ENCODE measurements at regions of chr18 and their contacts with region 1.

Region 1: GRCh38 chr18:9136315-9137155 is at the start of gene ANKRD12:
- DNase-seq: peak; percentile 98
- H3K4me3 Mint-ChIP-seq: peak within 1 kb of the TSS; percentile 95
- H3K27ac Mint-ChIP-seq: peak within 1 kb of the TSS; percentile 99
- H3K4me1 Mint-ChIP-seq: peaks cover 54% of the 10 kb centered on the region
- H3K27me3 Mint-ChIP-seq: no peaks in the 10 kb centered on the region
- total RNA-seq, gene ANKRD12: 66.0 and 68.7 TPM in 2 replicates

Region 2: GRCh38 chr18:9017170-9017904 is 119.2 kb before region 1 on chr18:
- intact Hi-C with region 1: loop called (anchors 2 kb)
- DNase-seq: peak; percentile 53
- H3K4me3 Mint-ChIP-seq: peak overlapping the region; percentile 28
- H3K27ac Mint-ChIP-seq: peak overlapping the region; percentile 62
- H3K4me1 Mint-ChIP-seq: peaks cover 19% of the 10 kb centered on the region
- H3K27me3 Mint-ChIP-seq: no peaks in the 10 kb centered on the region

Region 3: DNA sequence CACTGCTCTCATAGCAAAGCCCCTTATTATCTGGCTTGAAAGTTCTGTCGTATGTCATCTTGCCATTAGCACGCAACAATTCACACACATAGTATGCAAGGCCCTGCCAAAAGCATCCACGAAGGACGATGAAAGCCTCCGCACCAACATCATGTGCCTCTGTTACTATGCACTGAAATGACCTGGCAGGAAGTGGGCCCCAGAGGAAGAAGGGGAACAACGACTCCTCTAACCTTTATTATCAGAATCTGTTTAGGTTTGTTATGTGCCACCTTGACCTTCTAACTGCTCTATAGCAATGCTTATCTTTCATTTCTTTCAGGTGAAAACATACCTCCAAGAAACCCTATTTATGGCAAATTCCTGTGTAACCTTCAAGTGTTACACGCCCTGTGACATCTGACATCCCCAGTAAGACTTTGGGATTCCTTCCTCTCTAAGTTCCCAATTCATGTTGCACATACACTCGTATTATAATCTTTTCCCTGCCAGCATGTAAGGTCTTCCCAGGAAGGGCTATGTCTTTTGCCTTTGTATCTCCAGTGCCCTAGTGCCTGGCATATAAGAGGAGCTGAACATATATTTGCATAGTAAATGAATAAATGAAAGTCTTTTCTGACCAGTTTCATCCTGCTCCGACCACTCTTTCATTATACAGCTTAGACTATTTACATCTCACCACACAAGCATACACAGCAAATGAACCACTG is 41.1 kb before region 1 on chr18:
- intact Hi-C with region 1: loop called (anchors 2 kb)
- DNase-seq: peak; percentile 58
- H3K4me3 Mint-ChIP-seq: peak overlapping the region; percentile 62
- H3K27ac Mint-ChIP-seq: peak overlapping the region; percentile 99
- H3K4me1 Mint-ChIP-seq: peaks cover 66% of the 10 kb centered on the region
- H3K27me3 Mint-ChIP-seq: no peaks in the 10 kb centered on the region

Region 4: GRCh38 chr18:9117980-9118841 is 18.3 kb before region 1 on chr18:
- intact Hi-C with region 1: loop called (anchors 1 kb)
- DNase-seq: no peak
- H3K4me3 Mint-ChIP-seq: peak overlapping the region; percentile 39
- H3K27ac Mint-ChIP-seq: peak overlapping the region; percentile 84
- H3K4me1 Mint-ChIP-seq: peaks cover 51% of the 10 kb centered on the region
- H3K27me3 Mint-ChIP-seq: no peaks in the 10 kb centered on the region

Region 5: DNA sequence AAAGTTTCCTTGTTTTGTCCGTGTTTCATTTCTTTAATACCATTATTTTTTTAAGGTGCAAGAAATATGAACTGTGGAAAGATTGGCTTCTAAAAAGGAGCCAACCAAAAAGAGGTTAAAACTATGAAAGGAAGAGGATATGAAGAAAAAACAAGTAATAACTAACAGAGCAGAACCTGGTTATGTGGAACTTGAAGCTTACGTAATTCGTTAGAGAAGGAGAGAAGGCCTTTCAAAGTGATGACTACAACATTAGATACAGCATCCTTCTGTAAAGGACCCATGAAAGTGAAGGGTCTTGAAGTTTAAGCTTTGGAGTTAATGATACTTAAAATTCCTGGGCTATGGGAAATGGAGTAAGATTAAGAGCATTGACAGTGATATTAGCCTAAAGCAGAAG is 84.5 kb after region 1 on chr18:
- intact Hi-C with region 1: no loop called
- DNase-seq: no peak
- H3K4me3 Mint-ChIP-seq: no peak overlapping the region
- H3K27ac Mint-ChIP-seq: peak overlapping the region; percentile 3
- H3K4me1 Mint-ChIP-seq: peaks cover 2% of the 10 kb centered on the region
- H3K27me3 Mint-ChIP-seq: no peaks in the 10 kb centered on the region

Region 6: GRCh38 chr18:9334329-9334972 is 197.9 kb after region 1 on chr18 and contains the start of gene TWSG1:
- intact Hi-C with region 1: loop called (anchors 2 kb)
- DNase-seq: peak; percentile 89
- H3K4me3 Mint-ChIP-seq: peak within 1 kb of the TSS; percentile 84
- H3K27ac Mint-ChIP-seq: peak within 1 kb of the TSS; percentile 65
- H3K4me1 Mint-ChIP-seq: peaks cover 19% of the 10 kb centered on the region
- H3K27me3 Mint-ChIP-seq: peaks cover 25% of the 10 kb centered on the region
- total RNA-seq, gene TWSG1: 12.1 and 12.9 TPM in 2 replicates

Measured in activated T-helper 2 cell treated with anti-CD3 and anti-CD28 coated beads, Interferon-gamma antibody, Interleukin-2, Interleukin-4, amounts not matched to agents 10 μg/mL and 5 μg/mL and 100 μg/mL, durations not matched to agents 14 hours and 24 hours and 36 hours (primary cell).